ENCODE measurements at regions of chr11 and their contacts with region 1.

Region 1: DNA sequence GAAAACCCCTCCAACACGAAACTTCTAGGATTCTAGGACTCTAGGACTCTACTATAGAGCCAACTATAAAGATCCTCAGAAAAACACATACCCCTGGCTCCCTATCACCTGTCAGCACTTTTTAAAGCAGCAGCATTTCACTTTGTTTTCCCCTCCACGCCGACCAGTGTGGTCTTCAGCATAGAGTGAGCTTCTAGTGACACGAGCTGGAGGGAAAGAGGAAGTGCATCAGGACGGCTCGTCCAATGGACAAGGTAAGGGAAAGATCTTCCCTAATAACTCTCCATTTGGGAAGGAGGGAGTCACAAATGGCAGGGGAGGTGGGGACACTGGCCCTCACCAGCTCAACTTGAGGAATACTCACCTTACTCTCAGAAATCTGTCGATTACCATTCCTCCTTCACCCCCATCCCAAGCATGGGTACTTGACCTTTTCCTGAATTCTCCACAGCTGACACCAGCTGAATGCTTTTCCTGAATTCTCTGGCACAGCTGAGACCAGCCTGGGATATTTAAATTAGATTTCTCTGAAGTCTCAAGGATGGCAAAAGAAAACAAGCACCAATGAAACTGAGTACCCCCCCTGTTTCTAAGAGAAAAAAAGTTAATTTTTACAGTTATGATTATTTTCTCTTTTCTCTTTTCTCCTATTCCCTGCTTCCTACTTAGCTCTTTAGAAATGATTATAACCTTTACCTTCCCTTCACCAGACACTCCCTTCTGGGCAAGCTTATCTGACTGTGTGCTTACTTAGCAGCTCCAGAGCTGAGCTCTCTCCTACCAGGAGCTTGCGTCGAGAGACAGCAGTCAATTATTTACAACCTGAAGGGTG is 33.3 kb upstream of the NNMT start:
- DNase-seq: peak; percentile 24
- ATAC-seq: peak; percentile 26
- H3K4me3 Mint-ChIP-seq: no peak overlapping the region
- H3K27ac Mint-ChIP-seq: no peak overlapping the region
- H3K4me1 Mint-ChIP-seq: no peaks in the 10 kb centered on the region
- H3K27me3 Mint-ChIP-seq: peaks cover 4% of the 10 kb centered on the region

Region 2: DNA sequence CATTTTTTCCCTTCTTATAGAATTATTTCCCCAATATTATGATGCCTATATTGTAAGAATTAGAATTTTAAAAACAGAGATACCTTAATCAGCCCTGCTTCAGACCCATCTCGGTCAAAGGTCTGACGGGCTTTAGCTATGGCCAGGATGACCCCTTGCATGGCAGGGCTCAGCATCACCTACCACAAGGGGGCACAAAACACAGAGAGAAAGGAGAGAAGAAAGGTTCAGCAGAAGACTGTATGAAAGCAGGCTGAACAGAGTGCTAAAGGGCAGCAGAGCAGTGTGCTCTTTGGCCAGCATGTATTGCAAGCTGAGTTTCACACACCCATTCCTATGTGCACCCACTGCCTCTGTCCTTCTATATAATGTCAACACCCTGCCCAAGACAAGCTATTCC is 456.5 kb before region 1 on chr11:
- CTCF ChIA-PET with region 1: interaction called, 7 read pairs
- POLR2A ChIA-PET with region 1: no interaction called
- intact Hi-C with region 1: loop called (anchors 2 to 5 kb)
- DNase-seq: peak; percentile 29
- ATAC-seq: no peak
- H3K4me3 Mint-ChIP-seq: no peak overlapping the region
- H3K27ac Mint-ChIP-seq: no peak overlapping the region
- H3K4me1 Mint-ChIP-seq: no peaks in the 10 kb centered on the region
- H3K27me3 Mint-ChIP-seq: no peaks in the 10 kb centered on the region

Region 3: GRCh38 chr11:113994077-113994954 is 268.6 kb before region 1 on chr11:
- CTCF ChIA-PET with region 1: interaction called, 108 read pairs
- POLR2A ChIA-PET with region 1: no interaction called
- intact Hi-C with region 1: loop called (anchors 1 kb)
- DNase-seq: peak; percentile 51
- ATAC-seq: peak; percentile 51
- H3K4me3 Mint-ChIP-seq: no peak overlapping the region
- H3K27ac Mint-ChIP-seq: no peak overlapping the region
- H3K4me1 Mint-ChIP-seq: no peaks in the 10 kb centered on the region
- H3K27me3 Mint-ChIP-seq: peaks cover 14% of the 10 kb centered on the region

Region 4: GRCh38 chr11:114059278-114059983 is 203.5 kb before region 1 on chr11 and contains the start of gene ZBTB16:
- CTCF ChIA-PET with region 1: interaction called, 7 read pairs
- POLR2A ChIA-PET with region 1: no interaction called
- intact Hi-C with region 1: loop called in 1 of 2 experiments (anchors 1 kb)
- DNase-seq: peak; percentile 69
- ATAC-seq: peak; percentile 64
- H3K4me3 Mint-ChIP-seq: peak within 1 kb of the TSS; percentile 72
- H3K27ac Mint-ChIP-seq: no peak within 1 kb of the TSS
- H3K4me1 Mint-ChIP-seq: peaks cover 4% of the 10 kb centered on the region
- H3K27me3 Mint-ChIP-seq: peaks cover 31% of the 10 kb centered on the region
- total RNA-seq, gene ZBTB16: 3.0 to 4.6 TPM

Measured in activated CD4-positive, alpha-beta T cell treated with anti-CD3 and anti-CD28 coated beads for 36 hours (primary cell).